ENCODE measurements at regions of chr10 and their contacts with region 1.

Region 1: GRCh38 chr10:125373546-125373945 is 213.2 kb upstream of the CTBP2 start:
- DNase-seq: no peak
- H3K4me3 ChIP-seq: no peak overlapping the region
- H3K27ac ChIP-seq: no peak overlapping the region
- H3K4me1 ChIP-seq: no peaks in the 10 kb centered on the region
- H3K27me3 ChIP-seq: peaks cover 0 to 3% of the 10 kb centered on the region in 2 donors
- CTCF ChIP-seq: no peak
- POLR2A ChIP-seq: no peak

Region 2: DNA sequence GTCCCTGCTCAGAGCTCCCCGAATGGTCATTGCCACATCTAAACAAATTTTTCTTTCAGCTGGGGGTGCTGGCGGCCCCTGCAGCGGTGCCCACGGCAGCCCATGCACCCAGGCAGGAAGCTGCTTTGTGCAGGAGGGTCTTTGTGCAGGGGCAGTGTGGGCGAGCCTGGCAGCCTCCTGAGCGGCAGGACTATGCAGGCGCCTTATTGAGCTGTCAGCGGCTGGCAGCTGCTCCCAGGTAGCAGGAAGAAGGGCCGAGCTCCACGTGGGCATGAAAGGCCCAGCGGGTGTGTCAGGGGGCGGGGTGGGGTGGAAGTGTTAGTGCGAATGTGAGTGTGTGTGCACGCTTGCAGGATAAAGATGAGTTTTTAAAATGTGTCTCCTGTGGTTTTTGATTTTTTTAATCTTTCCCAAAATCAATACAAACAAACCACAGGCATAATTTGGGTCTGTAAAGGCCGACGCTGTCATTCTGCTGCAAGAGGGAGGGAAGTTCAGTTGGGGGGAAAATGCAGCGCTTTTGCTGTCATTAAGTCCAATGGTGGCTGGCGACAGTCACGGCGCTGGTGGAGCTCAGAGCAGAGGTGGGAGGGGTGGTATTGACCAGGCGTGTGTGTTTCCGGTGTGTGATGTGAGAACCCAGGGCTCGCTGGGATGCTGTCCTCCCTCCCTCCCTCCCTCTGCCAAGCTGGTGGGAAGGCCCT is 828.0 kb before region 1 on chr10:
- intact Hi-C with region 1: no loop called
- DNase-seq: no peak
- H3K4me3 ChIP-seq: no peak overlapping the region
- H3K27ac ChIP-seq: no peak overlapping the region
- H3K4me1 ChIP-seq: no peaks in the 10 kb centered on the region
- H3K27me3 ChIP-seq: no peaks in the 10 kb centered on the region
- CTCF ChIP-seq: no peak
- POLR2A ChIP-seq: no peak

Region 3: DNA sequence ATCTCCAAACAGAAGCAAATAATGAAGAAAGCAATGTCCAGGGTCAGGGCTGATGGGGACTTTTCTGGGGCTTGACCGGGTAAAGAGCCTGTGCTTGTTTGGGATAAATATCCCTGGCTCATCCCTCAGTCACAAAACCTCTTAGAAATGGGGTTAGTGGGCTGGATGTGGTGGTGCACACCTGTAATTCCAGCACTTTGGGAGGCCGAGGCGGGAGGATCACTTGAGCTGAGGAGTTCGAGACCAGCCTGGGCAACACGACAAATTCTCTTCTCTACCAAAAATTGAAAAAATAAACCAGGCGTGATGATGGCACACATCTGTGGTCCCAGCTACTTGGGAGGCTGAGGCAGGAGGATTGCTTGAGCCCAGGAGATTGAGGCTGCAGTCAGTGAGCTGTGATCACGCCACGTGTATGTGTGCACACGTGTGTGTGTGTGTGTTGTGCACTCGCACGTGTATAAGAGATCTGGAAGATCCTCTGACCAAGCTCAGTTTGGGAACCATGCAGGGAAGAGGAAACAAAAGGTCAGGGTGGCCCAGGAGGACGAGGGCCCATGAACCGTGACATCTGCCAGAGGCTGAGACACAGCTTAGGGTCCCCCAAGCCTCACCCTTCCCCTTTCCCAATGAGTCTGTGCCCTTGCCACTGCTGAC is 50.8 kb after region 1 on chr10:
- intact Hi-C with region 1: loop called (anchors 2 kb)
- DNase-seq: no peak
- H3K4me3 ChIP-seq: no peak overlapping the region
- H3K27ac ChIP-seq: no peak overlapping the region
- H3K4me1 ChIP-seq: no peaks in the 10 kb centered on the region
- H3K27me3 ChIP-seq: no peaks in the 10 kb centered on the region
- CTCF ChIP-seq: no peak
- POLR2A ChIP-seq: no peak

Region 4: GRCh38 chr10:125538947-125539731 is 165.6 kb after region 1 on chr10:
- intact Hi-C with region 1: no loop called
- DNase-seq: peak; percentile 59 to 73
- H3K4me3 ChIP-seq: no peak overlapping the region
- H3K27ac ChIP-seq: no peak overlapping the region
- H3K4me1 ChIP-seq: no peaks in the 10 kb centered on the region
- H3K27me3 ChIP-seq: peaks cover 0 to 4% of the 10 kb centered on the region in 2 donors
- CTCF ChIP-seq: no peak
- POLR2A ChIP-seq: no peak

Region 5: DNA sequence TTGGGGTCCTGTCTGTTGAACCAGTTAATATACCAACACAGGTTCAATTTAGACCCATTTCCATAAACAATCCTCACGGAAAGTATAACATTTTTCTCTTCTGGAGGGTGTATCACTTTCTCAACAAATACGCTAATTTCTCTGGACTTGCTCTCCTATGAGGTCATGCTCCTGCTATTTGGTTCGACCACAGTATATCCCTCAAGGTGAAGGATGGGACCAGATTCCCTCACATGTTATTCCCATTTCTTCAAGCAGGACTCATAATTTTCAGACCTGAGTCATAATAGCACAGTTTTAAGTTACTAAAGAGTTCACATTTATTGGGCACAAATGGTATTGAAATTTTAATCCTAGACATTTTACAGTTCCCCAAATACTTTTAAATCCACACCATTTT is 957.6 kb after region 1 on chr10:
- intact Hi-C with region 1: no loop called
- DNase-seq: no peak
- H3K4me3 ChIP-seq: no peak overlapping the region
- H3K27ac ChIP-seq: no peak overlapping the region
- H3K4me1 ChIP-seq: no peaks in the 10 kb centered on the region
- H3K27me3 ChIP-seq: no peaks in the 10 kb centered on the region
- CTCF ChIP-seq: no peak
- POLR2A ChIP-seq: no peak